Caco-2 (cell line): ENCODE measurements at regions of chr1 and their contacts with region 1.

Region 1: GRCh38 chr1:55727010-55727409 is 511.8 kb upstream of the USP24 start:
- DNase-seq: no peak
- H3K4me3 ChIP-seq: no peak overlapping the region
- H3K4me3 Mint-ChIP-seq: no peak overlapping the region
- H3K27ac Mint-ChIP-seq: no peak overlapping the region
- H3K4me1 ChIP-seq: no peaks in the 10 kb centered on the region
- H3K4me1 Mint-ChIP-seq: no peaks in the 10 kb centered on the region
- H3K27me3 ChIP-seq: no peaks in the 10 kb centered on the region
- H3K27me3 Mint-ChIP-seq: no peaks in the 10 kb centered on the region
- CTCF ChIP-seq: no peak

Region 2: DNA sequence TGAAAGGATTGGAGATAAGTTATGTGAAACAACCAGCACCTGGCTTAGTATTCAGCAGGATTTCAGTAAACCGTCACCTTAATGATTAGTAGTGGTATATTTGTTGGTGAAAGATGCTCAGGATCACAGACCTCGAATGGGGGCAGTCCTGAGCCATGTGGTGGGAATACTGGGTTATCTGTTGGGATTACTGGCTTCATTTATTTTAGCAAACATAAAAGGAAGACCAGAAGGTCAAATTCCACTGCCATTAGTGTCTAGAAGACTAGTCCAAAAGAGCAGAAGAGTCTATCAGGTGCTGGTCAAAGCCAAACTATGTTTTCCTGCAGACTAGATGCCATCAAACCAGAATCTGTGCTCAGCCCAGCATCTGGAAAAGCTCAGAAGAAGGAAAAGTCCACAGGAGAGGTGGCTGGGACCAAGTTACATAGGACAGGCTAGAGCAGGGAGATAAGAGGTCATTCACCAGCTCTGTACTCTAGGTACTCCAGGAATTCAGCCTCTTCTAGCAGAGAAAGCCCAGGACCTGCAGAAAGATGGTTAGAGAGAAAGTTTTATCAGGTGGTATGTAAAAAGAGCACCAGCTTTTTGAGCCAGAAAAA is 509.0 kb after region 1 on chr1:
- CTCF ChIA-PET with region 1: no interaction called
- POLR2A ChIA-PET with region 1: no interaction called
- intact Hi-C with region 1: loop called (anchors 10 kb)
- DNase-seq: peak; percentile 53 to 54
- H3K4me3 ChIP-seq: no peak overlapping the region
- H3K4me3 Mint-ChIP-seq: no peak overlapping the region
- H3K27ac Mint-ChIP-seq: no peak overlapping the region
- H3K4me1 ChIP-seq: peaks cover 11% of the 10 kb centered on the region
- H3K4me1 Mint-ChIP-seq: peaks cover 17% of the 10 kb centered on the region
- H3K27me3 ChIP-seq: no peaks in the 10 kb centered on the region
- H3K27me3 Mint-ChIP-seq: no peaks in the 10 kb centered on the region
- CTCF ChIP-seq: no peak